Sciatic nerve (tissue), 2 donors: ENCODE measurements at regions of chrX and their contacts with region 1.

Region 1: GRCh38 chrX:21821875-21822274 is 17.5 kb upstream of the MBTPS2 start:
- DNase-seq: no peak
- ATAC-seq: no peak

Region 2: DNA sequence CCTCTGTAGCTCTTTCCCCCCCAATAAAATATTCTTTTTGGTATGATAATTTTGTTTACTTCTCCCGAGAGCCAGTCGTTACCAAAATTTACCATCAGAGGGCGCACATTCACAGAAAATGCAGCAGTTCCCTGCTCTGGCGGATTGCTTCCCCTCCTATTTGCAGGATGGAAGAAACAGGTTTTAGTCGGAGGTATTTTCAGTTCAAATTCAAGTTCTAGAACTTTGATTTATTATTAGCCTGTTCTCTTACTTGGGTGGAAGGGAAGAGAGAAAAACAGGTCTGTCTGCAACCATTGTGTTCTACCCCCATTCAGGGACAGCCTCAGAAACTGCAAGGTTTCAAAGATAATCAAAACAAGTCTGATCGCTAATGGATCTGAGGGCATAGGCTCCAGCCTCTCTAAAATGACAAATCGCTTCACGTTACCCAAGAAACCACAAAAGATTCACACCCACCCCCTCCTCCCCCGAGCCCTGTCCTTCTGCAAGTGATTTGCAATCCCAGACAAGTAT is 1291.4 kb before region 1 on chrX:
- intact Hi-C with region 1: loop called (anchors 5 kb)
- DNase-seq: peak; percentile 78
- ATAC-seq: peak; percentile 75